ENCODE measurements at regions of chr16 and their contacts with region 1.

Region 1: DNA sequence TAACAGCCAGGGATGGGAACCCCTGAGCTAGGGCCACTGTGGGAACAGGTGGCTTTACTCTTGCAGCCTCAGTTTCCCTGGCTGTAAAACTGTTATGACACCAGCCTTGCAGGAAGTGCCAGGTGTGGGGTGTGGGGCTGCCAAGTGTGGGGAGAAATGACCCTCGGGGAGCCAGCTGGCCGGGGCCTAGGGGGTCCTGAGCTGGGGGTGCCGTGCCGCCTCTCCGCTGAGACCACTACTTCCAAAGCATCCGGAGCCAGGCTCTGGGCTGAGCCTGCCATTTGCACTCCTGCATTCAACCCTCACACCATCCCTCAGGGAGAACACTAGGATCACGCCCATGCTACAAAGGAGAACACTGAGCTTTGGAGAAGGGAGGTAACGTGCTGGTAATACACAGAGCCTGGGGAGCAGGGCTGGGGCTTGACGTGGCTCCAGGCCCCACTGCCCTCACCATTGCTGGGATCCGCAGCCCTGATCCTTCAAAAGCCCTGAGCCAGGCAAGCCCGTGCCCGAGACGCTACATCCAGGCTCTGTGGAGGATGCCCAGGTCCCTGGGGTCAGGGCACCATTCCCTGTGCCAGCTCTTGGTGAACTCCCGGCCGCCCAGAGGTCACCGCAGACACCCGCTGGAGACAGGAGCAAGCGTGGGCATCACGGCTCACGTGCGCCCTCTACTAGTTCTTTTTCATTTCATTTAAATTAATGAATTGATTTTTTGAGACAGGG is 28.8 kb upstream of the GINS2 start:
- DNase-seq: peak; percentile 76 to 86
- H3K4me3 ChIP-seq: no peak overlapping the region
- H3K4me3 Mint-ChIP-seq: no peak overlapping the region
- H3K27ac Mint-ChIP-seq: no peak overlapping the region
- H3K4me1 ChIP-seq: no peaks in the 10 kb centered on the region
- H3K4me1 Mint-ChIP-seq: no peaks in the 10 kb centered on the region
- H3K27me3 ChIP-seq: no peaks in the 10 kb centered on the region
- H3K27me3 Mint-ChIP-seq: no peaks in the 10 kb centered on the region
- CTCF ChIP-seq: peak; percentile 70 to 87

Region 2: DNA sequence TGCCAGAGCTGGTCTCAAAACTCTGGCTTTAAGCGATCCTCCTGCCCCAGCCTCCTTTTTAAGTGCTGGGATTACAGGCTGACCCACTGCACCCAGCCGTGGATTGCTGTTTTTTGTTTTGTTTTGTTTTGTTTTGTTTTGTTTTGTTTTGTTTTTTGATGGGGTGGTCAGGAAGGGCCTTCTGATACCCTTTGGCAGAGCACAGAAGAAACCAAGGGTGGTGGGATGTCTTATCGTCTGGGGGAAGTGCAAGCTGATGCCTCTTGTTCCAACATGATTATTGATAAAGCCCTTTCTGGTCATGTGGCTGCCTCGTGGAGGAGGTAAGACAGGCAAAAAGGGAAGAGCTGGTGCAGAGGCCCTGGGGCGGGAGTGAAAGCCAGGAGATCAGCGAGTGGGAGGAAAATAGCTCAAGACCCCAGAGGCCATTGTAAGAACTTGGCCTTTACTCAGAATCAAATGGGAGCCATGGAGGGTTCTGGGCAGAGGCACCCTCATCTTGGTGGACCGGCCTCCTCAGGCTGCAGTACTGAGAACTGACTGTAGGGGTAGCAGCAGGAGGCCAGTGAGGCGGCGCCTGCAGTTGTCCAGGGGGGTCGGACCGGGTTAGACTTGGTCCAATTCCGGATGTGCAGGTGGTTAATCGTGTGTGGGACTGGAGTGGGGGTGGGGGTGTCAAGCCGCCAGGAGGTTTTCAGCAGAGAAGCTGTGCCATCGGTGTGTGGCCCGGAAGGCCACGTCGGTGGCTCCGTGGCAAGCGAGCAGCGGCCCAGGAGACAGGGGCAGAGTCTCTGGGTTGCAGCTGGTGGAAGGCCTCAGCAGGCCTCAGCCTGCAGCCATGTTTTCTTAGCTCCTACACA is 188.8 kb before region 1 on chr16:
- CTCF ChIA-PET with region 1: no interaction called
- POLR2A ChIA-PET with region 1: no interaction called
- intact Hi-C with region 1: no loop called
- DNase-seq: peak in 1 of 2 experiments; percentile 67
- H3K4me3 ChIP-seq: no peak overlapping the region
- H3K4me3 Mint-ChIP-seq: no peak overlapping the region
- H3K27ac Mint-ChIP-seq: peak overlapping the region; percentile 13
- H3K4me1 ChIP-seq: peaks cover 70% of the 10 kb centered on the region
- H3K4me1 Mint-ChIP-seq: peaks cover 35% of the 10 kb centered on the region
- H3K27me3 ChIP-seq: no peaks in the 10 kb centered on the region
- H3K27me3 Mint-ChIP-seq: no peaks in the 10 kb centered on the region
- CTCF ChIP-seq: peak; percentile 58 to 61

Region 3: DNA sequence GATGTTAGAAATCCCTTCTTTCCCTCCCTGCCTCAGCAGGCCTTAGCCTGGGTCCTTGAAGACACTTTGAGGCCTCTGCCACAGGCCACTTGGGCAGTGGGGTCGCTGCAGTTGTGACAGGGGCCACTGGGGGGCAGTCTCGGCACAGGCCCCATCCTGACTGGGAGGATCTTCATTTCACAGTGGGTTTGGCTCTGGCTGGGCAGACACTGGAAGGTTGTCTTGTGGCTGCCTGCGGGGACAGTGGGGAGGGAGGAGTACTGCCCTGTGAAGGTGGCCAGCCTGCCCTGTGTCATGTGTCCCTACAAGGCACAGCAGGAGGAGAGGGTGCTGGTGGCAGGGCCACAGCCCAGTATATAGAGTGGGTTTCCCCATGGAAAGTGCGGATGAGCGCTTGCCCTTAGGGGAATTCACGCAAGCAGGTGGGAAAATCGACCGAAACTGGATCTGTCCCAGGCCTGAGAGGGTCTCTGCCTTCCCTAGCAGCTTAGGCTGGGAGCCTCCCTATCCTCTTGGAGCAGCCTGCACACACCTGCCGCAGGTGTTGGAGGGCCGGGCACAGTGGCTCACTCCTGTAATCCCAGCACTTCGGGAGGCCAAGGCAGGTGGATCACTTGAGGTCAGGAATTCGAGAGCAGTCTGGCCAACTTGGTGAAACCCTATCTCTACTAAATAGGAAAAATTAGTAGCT is 57.6 kb before region 1 on chr16:
- CTCF ChIA-PET with region 1: interaction called, 3 read pairs
- POLR2A ChIA-PET with region 1: no interaction called
- intact Hi-C with region 1: loop called (anchors 1 kb)
- DNase-seq: peak; percentile 76 to 87
- H3K4me3 ChIP-seq: no peak overlapping the region
- H3K4me3 Mint-ChIP-seq: no peak overlapping the region
- H3K27ac Mint-ChIP-seq: no peak overlapping the region
- H3K4me1 ChIP-seq: no peaks in the 10 kb centered on the region
- H3K4me1 Mint-ChIP-seq: no peaks in the 10 kb centered on the region
- H3K27me3 ChIP-seq: no peaks in the 10 kb centered on the region
- H3K27me3 Mint-ChIP-seq: no peaks in the 10 kb centered on the region
- CTCF ChIP-seq: peak; percentile 92 to 96

Region 4: DNA sequence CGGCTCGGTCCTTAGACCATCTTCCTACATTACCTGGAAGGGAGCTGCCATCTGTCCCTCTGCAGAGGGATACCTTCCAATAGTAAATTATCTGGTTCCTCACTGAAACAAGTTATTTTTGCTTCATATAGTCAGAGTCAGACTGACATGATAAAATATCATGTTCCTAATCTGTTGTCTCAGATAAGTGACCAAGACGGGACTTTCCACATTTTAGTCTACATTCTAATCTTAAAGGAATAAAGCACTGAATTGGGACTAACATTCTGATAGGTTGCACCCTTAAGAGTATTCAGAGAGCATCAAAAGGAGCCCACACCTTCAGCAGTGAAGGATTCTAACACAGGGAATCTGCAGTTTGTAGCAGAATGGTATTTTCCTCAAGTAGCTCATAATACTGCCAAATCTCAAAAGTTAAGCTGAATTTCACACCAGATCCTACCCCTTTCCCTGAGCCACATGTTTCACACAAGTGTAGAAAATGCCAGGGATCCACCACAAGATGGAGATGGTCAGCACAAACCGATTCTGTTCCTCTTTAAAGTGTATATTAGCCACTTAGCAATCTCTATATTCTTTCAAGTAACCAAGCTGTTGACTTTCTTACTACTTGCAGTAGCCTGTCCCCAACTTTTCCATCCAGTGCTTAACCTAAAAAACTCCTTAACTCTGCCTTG is 42.2 kb before region 1 on chr16:
- CTCF ChIA-PET with region 1: interaction called, 36 read pairs
- POLR2A ChIA-PET with region 1: no interaction called
- intact Hi-C with region 1: loop called (anchors 1 kb)
- DNase-seq: peak in 1 of 2 experiments; percentile 52
- H3K4me3 ChIP-seq: no peak overlapping the region
- H3K4me3 Mint-ChIP-seq: no peak overlapping the region
- H3K27ac Mint-ChIP-seq: no peak overlapping the region
- H3K4me1 ChIP-seq: peaks cover 11% of the 10 kb centered on the region; the same call in 1 of the 2 replicates
- H3K4me1 Mint-ChIP-seq: peaks cover 9% of the 10 kb centered on the region
- H3K27me3 ChIP-seq: no peaks in the 10 kb centered on the region
- H3K27me3 Mint-ChIP-seq: no peaks in the 10 kb centered on the region
- CTCF ChIP-seq: peak; percentile 72 to 77

Region 5: GRCh38 chr16:85688586-85689284 is 28.8 kb before region 1 on chr16 and contains the start of gene GINS2:
- CTCF ChIA-PET with region 1: interaction called, 16 read pairs
- POLR2A ChIA-PET with region 1: no interaction called
- intact Hi-C with region 1: no loop called
- DNase-seq: peak; percentile 97 to 98
- H3K4me3 ChIP-seq: peak within 1 kb of the TSS; percentile 96
- H3K4me3 Mint-ChIP-seq: peak within 1 kb of the TSS; percentile 79
- H3K27ac Mint-ChIP-seq: peak within 1 kb of the TSS; percentile 66
- H3K4me1 ChIP-seq: peaks cover 32% of the 10 kb centered on the region
- H3K4me1 Mint-ChIP-seq: peaks cover 15% of the 10 kb centered on the region
- H3K27me3 ChIP-seq: no peaks in the 10 kb centered on the region
- H3K27me3 Mint-ChIP-seq: no peaks in the 10 kb centered on the region
- CTCF ChIP-seq: no peak
- total RNA-seq, gene GINS2: 52.5 and 62.9 TPM in 2 replicates

Region 6: GRCh38 chr16:85750827-85751697 is 33.5 kb after region 1 on chr16 and contains the start of gene C16orf74:
- CTCF ChIA-PET with region 1: interaction called, 3 read pairs
- POLR2A ChIA-PET with region 1: no interaction called
- intact Hi-C with region 1: loop called (anchors 1 kb)
- DNase-seq: peak in 1 of 2 experiments; percentile 75
- H3K4me3 ChIP-seq: peak within 1 kb of the TSS; percentile 72
- H3K4me3 Mint-ChIP-seq: peak within 1 kb of the TSS; percentile 90
- H3K27ac Mint-ChIP-seq: peak within 1 kb of the TSS; percentile 69
- H3K4me1 ChIP-seq: peaks cover 28% of the 10 kb centered on the region
- H3K4me1 Mint-ChIP-seq: peaks cover 10% of the 10 kb centered on the region
- H3K27me3 ChIP-seq: no peaks in the 10 kb centered on the region; the same call in 1 of the 2 replicates
- H3K27me3 Mint-ChIP-seq: no peaks in the 10 kb centered on the region
- CTCF ChIP-seq: no peak
- total RNA-seq, gene C16orf74: 3.8 and 4.0 TPM in 2 replicates